ENCODE measurements at regions of chr12 and their contacts with region 1.

Region 1: GRCh38 chr12:12562585-12563261 is at the start of gene DUSP16:
- DNase-seq: peak; percentile 75
- ATAC-seq: peak; percentile 78
- H3K4me3 ChIP-seq: peak within 1 kb of the TSS; percentile 97
- H3K27ac ChIP-seq: peak within 1 kb of the TSS; percentile 100
- H3K4me1 ChIP-seq: peaks cover 13% of the 10 kb centered on the region
- H3K27me3 ChIP-seq: no peaks in the 10 kb centered on the region
- CTCF ChIP-seq: peak in 1 of 3 experiments; percentile 27; a peak in 1 of 6 replicates
- EP300 ChIP-seq: 0 out of 4 replicates have a peak, but pooled peaks of 1 of the 2 experiments have one; percentile 10
- POLR2A ChIP-seq: peak; percentile 80
- RAD21 ChIP-seq: 0 out of 2 replicates have a peak, but pooled peaks have one; percentile 18
- polyA plus RNA-seq, gene DUSP16: 3.9 to 5.0 TPM

Region 2: GRCh38 chr12:12384571-12385340 is 178.0 kb before region 1 on chr12:
- CTCF ChIA-PET with region 1: interaction called, 13 read pairs
- POLR2A ChIA-PET with region 1: no interaction called
- RAD21 ChIA-PET with region 1: interaction called, 24 read pairs
- SMC1A ChIA-PET with region 1: interaction called, 28 read pairs
- in situ Hi-C with region 1: loop called (anchors 10 kb)
- intact Hi-C with region 1: no loop called
- DNase-seq: no peak
- ATAC-seq: peak; percentile 88
- H3K4me3 ChIP-seq: no peak overlapping the region
- H3K27ac ChIP-seq: no peak overlapping the region
- H3K4me1 ChIP-seq: peaks cover 7% of the 10 kb centered on the region
- H3K27me3 ChIP-seq: no peaks in the 10 kb centered on the region
- CTCF ChIP-seq: no peak
- EP300 ChIP-seq: 0 out of 4 replicates have a peak, but pooled peaks of 1 of the 2 experiments have one; percentile 11
- POLR2A ChIP-seq: no peak
- RAD21 ChIP-seq: no peak

Region 3: GRCh38 chr12:12505544-12506495 is 56.9 kb before region 1 on chr12:
- CTCF ChIA-PET with region 1: interaction called, 14 read pairs
- POLR2A ChIA-PET with region 1: interaction called, 15 read pairs
- RAD21 ChIA-PET with region 1: interaction called, 24 read pairs
- SMC1A ChIA-PET with region 1: interaction called, 34 read pairs
- in situ Hi-C with region 1: no loop called
- intact Hi-C with region 1: loop called (anchors 5 kb)
- DNase-seq: peak; percentile 94
- ATAC-seq: peak; percentile 87
- H3K4me3 ChIP-seq: peak overlapping the region; percentile 30
- H3K27ac ChIP-seq: peak overlapping the region; percentile 80
- H3K4me1 ChIP-seq: peaks cover 36% of the 10 kb centered on the region
- H3K27me3 ChIP-seq: no peaks in the 10 kb centered on the region
- CTCF ChIP-seq: no peak
- EP300 ChIP-seq: peak; percentile 92
- POLR2A ChIP-seq: no peak
- RAD21 ChIP-seq: peak; percentile 19; the same call in 1 of the 2 replicates

Region 4: DNA sequence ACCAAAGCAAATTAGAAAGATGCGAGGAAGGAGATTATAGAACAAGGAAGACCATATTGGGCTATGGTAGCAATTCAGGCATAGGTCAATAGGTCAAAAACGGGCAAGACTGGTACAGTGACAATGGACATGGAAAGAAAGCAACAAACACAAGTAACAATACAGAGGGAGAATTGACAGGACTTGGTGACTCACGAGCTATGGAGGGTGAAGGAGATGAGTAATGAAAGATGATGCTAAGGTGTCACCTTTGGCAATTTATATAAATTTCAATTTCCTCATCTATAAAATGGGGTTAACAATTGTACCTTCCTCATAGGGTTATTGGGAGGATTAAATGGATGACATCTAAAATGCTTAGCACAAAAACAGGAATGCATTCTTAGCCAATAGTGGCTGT is 15.1 kb after region 1 on chr12:
- CTCF ChIA-PET with region 1: interaction called, 27 read pairs
- POLR2A ChIA-PET with region 1: interaction called, 18 read pairs
- RAD21 ChIA-PET with region 1: interaction called, 23 read pairs
- SMC1A ChIA-PET with region 1: interaction called, 19 read pairs
- in situ Hi-C with region 1: no loop called
- intact Hi-C with region 1: no loop called
- DNase-seq: no peak
- ATAC-seq: no peak
- H3K4me3 ChIP-seq: no peak overlapping the region
- H3K27ac ChIP-seq: no peak overlapping the region
- H3K4me1 ChIP-seq: peaks cover 17% of the 10 kb centered on the region
- H3K27me3 ChIP-seq: no peaks in the 10 kb centered on the region
- CTCF ChIP-seq: no peak
- EP300 ChIP-seq: no peak
- POLR2A ChIP-seq: no peak
- RAD21 ChIP-seq: no peak

Region 5: DNA sequence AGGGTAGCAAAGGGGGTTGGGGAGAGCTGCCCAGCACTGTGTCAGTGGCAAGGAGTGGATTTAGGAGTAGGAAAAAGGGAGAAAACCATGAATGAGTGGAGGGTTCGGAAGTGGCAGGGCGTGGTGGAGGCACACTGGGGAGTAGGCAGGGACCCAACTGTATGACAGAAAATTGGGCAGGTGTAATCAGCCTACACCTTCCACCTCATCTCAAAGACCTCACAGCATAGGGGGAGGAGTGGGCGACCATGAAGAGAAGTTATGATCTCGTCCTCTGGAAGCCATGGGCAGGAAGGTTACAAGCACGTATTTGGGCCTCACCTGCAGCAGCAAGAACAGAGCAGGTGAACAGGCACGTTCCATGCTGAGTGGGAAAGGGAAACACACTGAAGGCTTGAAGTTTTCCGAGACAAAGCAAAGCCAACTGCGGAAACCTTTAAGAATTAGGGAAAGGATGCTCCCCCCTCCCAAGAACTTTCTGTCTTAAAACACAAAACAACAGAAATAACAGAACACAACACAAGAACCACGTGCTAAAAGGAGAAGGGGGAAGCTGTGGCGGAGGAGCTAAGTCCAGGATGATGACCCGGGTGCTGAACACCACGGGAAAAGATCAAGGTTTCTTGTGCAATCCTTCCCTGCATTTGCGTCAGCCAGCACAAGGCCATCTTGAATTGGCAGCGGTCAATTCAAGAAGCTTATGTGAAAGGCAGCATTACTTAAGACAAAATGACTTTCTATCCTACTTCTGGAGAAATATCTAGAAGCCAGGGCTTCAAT is 37.7 kb after region 1 on chr12:
- CTCF ChIA-PET with region 1: no interaction called
- POLR2A ChIA-PET with region 1: no interaction called
- RAD21 ChIA-PET with region 1: no interaction called
- SMC1A ChIA-PET with region 1: no interaction called
- in situ Hi-C with region 1: no loop called
- intact Hi-C with region 1: no loop called
- DNase-seq: no peak
- ATAC-seq: no peak
- H3K4me3 ChIP-seq: no peak overlapping the region
- H3K27ac ChIP-seq: no peak overlapping the region
- H3K4me1 ChIP-seq: no peaks in the 10 kb centered on the region
- H3K27me3 ChIP-seq: no peaks in the 10 kb centered on the region
- CTCF ChIP-seq: no peak
- EP300 ChIP-seq: no peak
- POLR2A ChIP-seq: no peak
- RAD21 ChIP-seq: no peak

Region 6: GRCh38 chr12:12654691-12655460 is 92.2 kb after region 1 on chr12:
- CTCF ChIA-PET with region 1: interaction called, 9 read pairs
- POLR2A ChIA-PET with region 1: interaction called, 3 read pairs
- RAD21 ChIA-PET with region 1: interaction called, 3 read pairs
- SMC1A ChIA-PET with region 1: interaction called, 7 read pairs
- in situ Hi-C with region 1: no loop called
- intact Hi-C with region 1: loop called (anchors 5 kb)
- DNase-seq: no peak
- ATAC-seq: 0 out of 3 replicates have a peak, but pooled peaks have one; percentile 8
- H3K4me3 ChIP-seq: no peak overlapping the region
- H3K27ac ChIP-seq: no peak overlapping the region
- H3K4me1 ChIP-seq: no peaks in the 10 kb centered on the region; the same call in 1 of the 2 replicates
- H3K27me3 ChIP-seq: no peaks in the 10 kb centered on the region
- CTCF ChIP-seq: no peak
- EP300 ChIP-seq: no peak
- POLR2A ChIP-seq: no peak
- RAD21 ChIP-seq: no peak

Region 7: DNA sequence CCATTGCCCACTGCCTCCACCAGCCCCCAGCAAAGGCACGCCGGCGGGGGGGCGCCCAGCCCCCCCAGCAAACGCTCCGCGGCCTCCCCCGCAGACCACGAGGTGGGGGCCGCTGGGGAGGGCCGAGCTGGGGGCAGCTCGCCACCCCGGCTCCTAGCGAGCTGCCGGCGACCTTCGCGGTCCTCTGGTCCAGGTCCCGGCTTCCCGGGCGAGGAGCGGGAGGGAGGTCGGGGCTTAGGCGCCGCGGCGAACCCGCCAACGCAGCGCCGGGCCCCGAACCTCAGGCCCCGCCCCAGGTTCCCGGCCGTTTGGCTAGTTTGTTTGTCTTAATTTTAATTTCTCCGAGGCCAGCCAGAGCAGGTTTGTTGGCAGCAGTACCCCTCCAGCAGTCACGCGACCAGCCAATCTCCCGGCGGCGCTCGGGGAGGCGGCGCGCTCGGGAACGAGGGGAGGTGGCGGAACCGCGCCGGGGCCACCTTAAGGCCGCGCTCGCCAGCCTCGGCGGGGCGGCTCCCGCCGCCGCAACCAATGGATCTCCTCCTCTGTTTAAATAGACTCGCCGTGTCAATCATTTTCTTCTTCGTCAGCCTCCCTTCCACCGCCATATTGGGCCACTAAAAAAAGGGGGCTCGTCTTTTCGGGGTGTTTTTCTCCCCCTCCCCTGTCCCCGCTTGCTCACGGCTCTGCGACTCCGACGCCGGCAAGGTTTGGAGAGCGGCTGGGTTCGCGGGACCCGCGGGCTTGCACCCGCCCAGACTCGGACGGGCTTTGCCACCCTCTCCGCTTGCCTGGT is 154.3 kb after region 1 on chr12 and contains the start of gene CDKN1B:
- CTCF ChIA-PET with region 1: no interaction called
- POLR2A ChIA-PET with region 1: interaction called, 5 read pairs
- RAD21 ChIA-PET with region 1: interaction called, 4 read pairs
- SMC1A ChIA-PET with region 1: interaction called, 14 read pairs
- in situ Hi-C with region 1: loop called (anchors 5 kb)
- intact Hi-C with region 1: loop called (anchors 5 kb)
- DNase-seq: peak; percentile 58
- ATAC-seq: peak; percentile 74
- H3K4me3 ChIP-seq: peak within 1 kb of the TSS; percentile 97
- H3K27ac ChIP-seq: peak within 1 kb of the TSS; percentile 97
- H3K4me1 ChIP-seq: peaks cover 20% of the 10 kb centered on the region
- H3K27me3 ChIP-seq: no peaks in the 10 kb centered on the region
- CTCF ChIP-seq: no peak
- EP300 ChIP-seq: no peak
- POLR2A ChIP-seq: peak; percentile 75
- RAD21 ChIP-seq: no peak
- polyA plus RNA-seq, gene CDKN1B: 4.2 to 8.0 TPM

Measured in GM12878 (cell line).